Activated CD4-positive, alpha-beta memory T cell treated with anti-CD3 and anti-CD28 coated beads for 36 hours (primary cell): ENCODE measurements at regions of chr4 and their contacts with region 1.

Region 1: DNA sequence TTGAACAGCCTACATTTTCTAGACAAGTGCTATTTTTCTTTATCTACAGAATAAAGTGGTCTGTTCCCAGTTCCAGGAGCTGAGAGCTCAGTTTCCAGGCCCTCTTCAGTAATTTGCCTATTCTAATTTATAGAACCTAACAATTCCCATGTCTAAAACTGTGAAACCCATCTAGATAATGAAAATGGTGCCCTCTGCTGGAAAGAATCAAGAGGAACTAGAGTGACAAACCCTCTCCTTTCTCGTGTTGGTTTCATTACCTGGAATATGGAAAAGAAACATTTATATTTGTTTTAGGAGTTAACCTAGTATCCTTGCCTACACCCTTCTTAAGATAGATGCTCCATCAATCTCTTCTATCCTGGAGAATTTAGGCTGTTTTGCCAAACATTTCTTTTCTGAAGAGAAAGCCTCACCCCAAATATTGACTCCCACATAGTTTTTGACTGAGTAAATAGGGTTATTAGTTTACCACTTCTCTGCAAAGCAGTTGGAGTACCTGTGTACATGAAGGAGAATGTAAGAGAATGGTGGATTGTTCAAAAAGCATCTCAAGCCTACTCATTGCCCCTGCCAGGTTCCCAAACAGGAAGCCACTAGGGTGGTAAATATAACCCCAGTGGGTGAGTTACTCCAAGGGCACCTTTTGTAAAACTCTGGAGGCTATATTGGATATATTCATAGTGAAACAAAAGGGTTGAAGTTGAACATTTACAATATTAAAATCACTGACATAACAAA is 121.6 kb downstream of the RASL11B start:
- DNase-seq: no peak
- H3K4me3 Mint-ChIP-seq: no peak overlapping the region
- H3K27ac Mint-ChIP-seq: no peak overlapping the region
- H3K4me1 Mint-ChIP-seq: peaks cover 4% of the 10 kb centered on the region
- H3K27me3 Mint-ChIP-seq: no peaks in the 10 kb centered on the region

Region 2: DNA sequence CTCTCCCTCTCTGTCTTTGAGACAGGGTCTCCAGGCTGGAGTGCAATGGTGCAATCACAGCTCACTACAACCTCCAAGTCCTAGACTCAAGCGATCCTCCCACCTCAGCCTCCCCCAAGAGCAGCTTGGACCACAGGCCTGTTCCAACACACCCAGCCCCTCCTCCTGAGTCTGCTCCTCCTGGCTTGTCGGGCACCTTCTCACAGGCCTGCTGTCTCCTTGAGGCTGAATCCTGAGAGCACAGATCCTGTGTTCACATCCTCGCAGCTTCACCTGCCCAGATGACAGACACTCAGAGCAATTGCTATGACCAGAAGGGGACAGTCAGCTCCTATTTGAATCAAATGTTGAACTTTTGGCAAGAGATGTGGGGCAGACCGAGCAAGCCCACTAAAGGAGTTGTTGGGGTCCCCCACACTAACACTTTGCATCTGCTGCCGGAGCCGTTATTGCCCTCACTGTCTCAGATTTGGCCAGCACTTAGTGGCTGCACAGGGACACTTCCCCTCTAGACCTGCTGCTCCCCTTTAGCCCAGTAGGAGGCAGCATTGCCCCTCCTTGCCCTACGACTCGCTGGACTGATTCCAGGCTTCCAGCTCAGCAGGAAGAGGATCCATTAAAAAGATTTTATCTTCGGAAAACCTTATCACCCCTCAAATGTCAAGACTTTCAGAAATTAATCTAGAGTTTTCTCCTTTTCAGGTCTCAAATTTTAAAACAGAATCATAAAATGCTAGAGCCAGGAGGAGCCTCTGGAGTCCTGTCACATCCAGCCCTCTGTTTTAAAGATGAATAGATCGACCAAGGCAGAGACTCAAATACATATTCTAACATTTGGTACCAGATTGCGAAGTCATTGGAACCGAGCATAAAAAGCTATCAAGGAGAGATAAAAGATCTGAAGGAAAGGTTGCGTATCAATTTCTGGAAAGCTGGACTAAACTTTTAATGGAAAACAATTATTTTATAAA is 438.3 kb before region 1 on chr4:
- CTCF ChIA-PET with region 1: interaction called, 132 read pairs
- POLR2A ChIA-PET with region 1: no interaction called
- intact Hi-C with region 1: loop called (anchors 2 kb)
- DNase-seq: peak; percentile 75
- H3K4me3 Mint-ChIP-seq: no peak overlapping the region
- H3K27ac Mint-ChIP-seq: no peak overlapping the region
- H3K4me1 Mint-ChIP-seq: no peaks in the 10 kb centered on the region
- H3K27me3 Mint-ChIP-seq: peaks cover 4% of the 10 kb centered on the region

Region 3: DNA sequence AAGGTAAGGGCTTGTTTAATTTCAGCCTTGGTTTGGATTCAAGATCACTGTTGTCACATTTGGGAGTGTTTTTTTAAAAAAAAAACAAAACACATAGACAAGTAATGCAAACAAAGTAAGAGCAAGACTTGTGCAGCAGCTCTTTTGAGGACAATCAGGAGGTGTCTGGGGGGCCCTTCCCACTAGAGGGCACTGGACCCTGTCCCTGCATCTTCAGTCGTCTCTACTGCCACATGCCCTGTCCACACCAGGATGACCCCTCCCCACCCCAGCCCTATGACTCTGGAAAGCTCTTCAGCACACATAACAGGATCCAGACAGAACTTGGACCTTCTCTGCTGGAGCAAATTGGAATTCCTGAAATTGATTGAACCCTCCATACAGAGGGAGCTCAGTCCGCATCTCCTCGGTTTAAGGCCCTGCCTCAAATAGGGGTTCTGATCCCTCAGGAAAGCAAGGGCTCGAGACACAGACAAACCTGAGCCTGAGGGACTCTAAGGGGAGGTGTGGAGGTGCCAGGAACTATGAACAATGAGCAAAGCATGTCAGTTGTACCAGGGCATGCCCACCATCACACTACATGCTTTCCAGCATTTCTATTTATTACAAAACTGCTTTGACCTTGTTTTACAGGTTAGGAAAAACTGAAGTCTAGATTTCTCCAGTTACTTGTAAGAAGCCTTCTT is 395.5 kb before region 1 on chr4:
- CTCF ChIA-PET with region 1: interaction called, 24 read pairs
- POLR2A ChIA-PET with region 1: no interaction called
- intact Hi-C with region 1: loop called (anchors 2 kb)
- DNase-seq: peak; percentile 51
- H3K4me3 Mint-ChIP-seq: no peak overlapping the region
- H3K27ac Mint-ChIP-seq: peak overlapping the region; percentile 44
- H3K4me1 Mint-ChIP-seq: peaks cover 31% of the 10 kb centered on the region
- H3K27me3 Mint-ChIP-seq: no peaks in the 10 kb centered on the region

Region 4: DNA sequence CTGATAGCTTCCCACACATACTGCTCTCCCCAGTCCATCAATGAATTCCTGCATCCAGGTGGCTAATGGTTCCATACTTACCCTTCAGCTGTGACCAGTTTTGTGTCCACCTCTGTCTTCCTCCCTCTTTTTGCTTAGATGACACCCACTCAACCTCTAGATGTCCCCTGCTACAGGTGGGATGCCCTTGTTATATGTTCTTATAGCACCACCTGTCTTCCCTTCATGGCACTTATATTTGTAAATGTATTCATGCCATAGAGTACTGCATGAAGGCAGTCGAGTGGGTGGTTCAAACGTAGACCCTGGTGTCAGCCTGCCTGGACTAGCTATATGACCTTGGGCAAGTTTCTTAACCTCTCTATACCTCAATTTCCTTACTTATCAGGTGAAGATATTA is 318.1 kb before region 1 on chr4:
- CTCF ChIA-PET with region 1: interaction called, 3 read pairs
- POLR2A ChIA-PET with region 1: no interaction called
- intact Hi-C with region 1: loop called (anchors 2 kb)
- DNase-seq: no peak
- H3K4me3 Mint-ChIP-seq: no peak overlapping the region
- H3K27ac Mint-ChIP-seq: no peak overlapping the region
- H3K4me1 Mint-ChIP-seq: peaks cover 11% of the 10 kb centered on the region
- H3K27me3 Mint-ChIP-seq: peaks cover 8% of the 10 kb centered on the region

Region 5: GRCh38 chr4:52824603-52825459 is 158.9 kb before region 1 on chr4:
- CTCF ChIA-PET with region 1: interaction called, 3 read pairs
- POLR2A ChIA-PET with region 1: no interaction called
- intact Hi-C with region 1: loop called (anchors 5 kb)
- DNase-seq: no peak
- H3K4me3 Mint-ChIP-seq: no peak overlapping the region
- H3K27ac Mint-ChIP-seq: peak overlapping the region; percentile 14
- H3K4me1 Mint-ChIP-seq: peaks cover 39% of the 10 kb centered on the region
- H3K27me3 Mint-ChIP-seq: no peaks in the 10 kb centered on the region

Region 6: DNA sequence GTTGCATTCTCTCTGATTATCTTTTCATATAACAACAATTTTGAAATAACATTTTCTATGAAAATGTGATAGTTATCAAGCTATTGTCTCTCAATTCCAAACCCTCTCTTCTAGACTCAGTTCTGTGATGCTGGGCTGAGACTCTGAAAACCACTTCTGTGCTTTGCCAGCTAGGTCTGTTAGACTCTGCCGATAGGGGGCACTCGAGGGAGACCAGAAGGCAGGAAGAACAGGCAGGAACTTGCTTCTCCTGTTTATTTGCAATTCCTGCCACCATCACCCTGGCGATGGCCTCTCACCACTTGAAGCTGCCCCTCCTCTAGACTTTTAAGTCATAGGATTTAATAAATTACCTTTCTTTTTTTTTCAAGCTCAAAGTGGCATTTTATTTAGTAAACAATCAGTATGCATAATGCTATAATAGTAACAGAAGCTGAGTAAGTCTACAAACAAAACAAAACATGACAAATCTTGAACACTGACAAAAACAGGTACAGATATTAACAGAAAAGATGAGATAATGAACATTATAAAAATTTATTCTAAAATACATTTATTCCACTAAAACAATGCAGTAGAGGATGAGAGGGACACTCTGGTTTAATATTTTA is 71.9 kb before region 1 on chr4:
- CTCF ChIA-PET with region 1: interaction called, 4 read pairs
- POLR2A ChIA-PET with region 1: no interaction called
- intact Hi-C with region 1: loop called (anchors 2 kb)
- DNase-seq: peak; percentile 82
- H3K4me3 Mint-ChIP-seq: no peak overlapping the region
- H3K27ac Mint-ChIP-seq: no peak overlapping the region
- H3K4me1 Mint-ChIP-seq: no peaks in the 10 kb centered on the region
- H3K27me3 Mint-ChIP-seq: no peaks in the 10 kb centered on the region